B cell (primary cell): ENCODE measurements at regions of chr5 and their contacts with region 1.

Region 1: DNA sequence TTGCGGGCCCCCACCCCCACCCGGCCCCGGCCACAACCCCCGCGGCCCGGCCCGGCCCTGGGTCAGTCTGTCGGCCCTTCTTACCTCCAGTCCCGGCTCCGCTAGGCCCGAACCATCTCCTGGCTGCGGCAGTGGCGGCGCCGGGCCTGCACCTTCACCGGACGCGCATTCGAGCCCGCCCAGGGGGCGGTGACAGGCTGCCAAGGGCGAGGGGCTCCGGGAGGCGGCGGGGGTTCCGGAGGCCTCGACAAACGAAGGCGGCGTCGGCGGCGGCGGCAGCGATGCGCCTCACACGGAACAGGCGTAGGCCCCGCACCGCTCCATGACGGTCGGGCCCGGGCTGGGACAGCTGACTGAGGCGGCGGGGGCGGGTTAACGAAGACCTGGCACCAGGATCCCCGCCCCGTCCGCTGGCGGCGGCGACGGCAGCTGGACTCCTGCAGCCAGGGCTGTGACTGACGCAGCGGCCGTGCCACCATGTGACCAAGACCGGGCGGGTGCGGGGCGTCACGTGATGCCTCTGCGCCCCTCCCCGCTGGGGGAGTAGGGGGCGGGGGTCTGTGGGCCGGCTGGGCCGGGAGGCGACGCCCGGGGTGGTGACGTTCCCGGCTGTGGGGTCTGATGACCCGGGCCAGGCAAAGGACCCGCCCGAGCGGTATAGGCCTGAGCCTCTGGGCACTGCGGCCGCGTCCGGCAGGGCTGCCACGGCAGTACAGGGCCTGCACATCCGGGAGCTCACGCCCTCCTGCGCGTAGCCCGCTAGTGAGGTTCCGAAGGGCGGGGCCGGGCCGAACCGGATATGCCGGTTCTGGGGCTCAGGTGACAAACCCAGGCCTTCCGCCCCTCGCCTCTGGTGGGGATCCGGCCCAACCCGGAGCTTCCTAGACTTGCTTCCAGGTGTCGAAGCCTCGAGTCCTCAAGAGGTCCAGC is at the start of gene AFF4:
- DNase-seq: peak; percentile 96
- ATAC-seq: peak; percentile 84
- H3K4me3 ChIP-seq: peak within 1 kb of the TSS; percentile 63 to 95 (median 83)
- H3K4me3 Mint-ChIP-seq: peak within 1 kb of the TSS; percentile 97
- H3K27ac ChIP-seq: peak within 1 kb of the TSS; percentile 92 to 97
- H3K27ac Mint-ChIP-seq: peak within 1 kb of the TSS; percentile 94
- H3K4me1 ChIP-seq: peaks cover 17 to 26% of the 10 kb centered on the region in 2 donors
- H3K4me1 Mint-ChIP-seq: peaks cover 29% of the 10 kb centered on the region
- H3K27me3 ChIP-seq: no peaks in the 10 kb centered on the region
- H3K27me3 Mint-ChIP-seq: no peaks in the 10 kb centered on the region
- CTCF ChIP-seq: no peak
- total RNA-seq, gene AFF4: 81.5 and 87.4 TPM in 2 replicates

Region 2: GRCh38 chr5:132866342-132867045 is 96.9 kb before region 1 on chr5 and contains the starts of genes GDF9 and UQCRQ:
- CTCF ChIA-PET with region 1: no interaction called
- POLR2A ChIA-PET with region 1: no interaction called
- intact Hi-C with region 1: loop called (anchors 1 kb)
- DNase-seq: peak; percentile 97
- ATAC-seq: peak; percentile 99
- H3K4me3 ChIP-seq: peak within 1 kb of the TSS; percentile 67 to 93 (median 81)
- H3K4me3 Mint-ChIP-seq: peak within 1 kb of the TSS; percentile 93
- H3K27ac ChIP-seq: peak within 1 kb of the TSS; percentile 92 to 93
- H3K27ac Mint-ChIP-seq: peak within 1 kb of the TSS; percentile 98
- H3K4me1 ChIP-seq: peaks cover 16 to 19% of the 10 kb centered on the region in 2 donors
- H3K4me1 Mint-ChIP-seq: peaks cover 26% of the 10 kb centered on the region
- H3K27me3 ChIP-seq: no peaks in the 10 kb centered on the region
- H3K27me3 Mint-ChIP-seq: no peaks in the 10 kb centered on the region
- CTCF ChIP-seq: no peak
- total RNA-seq, gene GDF9: 0.51 and 0.67 TPM in 2 replicates
- total RNA-seq, gene UQCRQ: 78.5 and 90.0 TPM in 2 replicates

Region 3: GRCh38 chr5:132988124-132988408 is 24.6 kb after region 1 on chr5:
- CTCF ChIA-PET with region 1: interaction called, 3 read pairs
- POLR2A ChIA-PET with region 1: interaction called, 15 read pairs
- intact Hi-C with region 1: no loop called
- DNase-seq: no peak
- ATAC-seq: no peak
- H3K4me3 ChIP-seq: no peak overlapping the region
- H3K4me3 Mint-ChIP-seq: no peak overlapping the region
- H3K27ac ChIP-seq: no peak overlapping the region
- H3K27ac Mint-ChIP-seq: no peak overlapping the region
- H3K4me1 ChIP-seq: no peaks in the 10 kb centered on the region
- H3K4me1 Mint-ChIP-seq: no peaks in the 10 kb centered on the region
- H3K27me3 ChIP-seq: no peaks in the 10 kb centered on the region
- H3K27me3 Mint-ChIP-seq: no peaks in the 10 kb centered on the region
- CTCF ChIP-seq: no peak

Region 4: GRCh38 chr5:133025804-133026663 is 62.6 kb after region 1 on chr5 and contains the start of gene ZCCHC10:
- CTCF ChIA-PET with region 1: interaction called, 3 read pairs
- POLR2A ChIA-PET with region 1: interaction called, 7 read pairs
- intact Hi-C with region 1: loop called (anchors 1 kb)
- DNase-seq: peak; percentile 94
- ATAC-seq: peak; percentile 99
- H3K4me3 ChIP-seq: peak within 1 kb of the TSS; percentile 93 to 100 (median 98)
- H3K4me3 Mint-ChIP-seq: peak within 1 kb of the TSS; percentile 90
- H3K27ac ChIP-seq: peak within 1 kb of the TSS; percentile 92 to 98
- H3K27ac Mint-ChIP-seq: peak within 1 kb of the TSS; percentile 93
- H3K4me1 ChIP-seq: peaks cover 26 to 32% of the 10 kb centered on the region in 2 donors
- H3K4me1 Mint-ChIP-seq: peaks cover 42% of the 10 kb centered on the region
- H3K27me3 ChIP-seq: no peaks in the 10 kb centered on the region
- H3K27me3 Mint-ChIP-seq: no peaks in the 10 kb centered on the region
- CTCF ChIP-seq: no peak
- total RNA-seq, gene ZCCHC10: 30.6 and 34.0 TPM in 2 replicates

Region 5: DNA sequence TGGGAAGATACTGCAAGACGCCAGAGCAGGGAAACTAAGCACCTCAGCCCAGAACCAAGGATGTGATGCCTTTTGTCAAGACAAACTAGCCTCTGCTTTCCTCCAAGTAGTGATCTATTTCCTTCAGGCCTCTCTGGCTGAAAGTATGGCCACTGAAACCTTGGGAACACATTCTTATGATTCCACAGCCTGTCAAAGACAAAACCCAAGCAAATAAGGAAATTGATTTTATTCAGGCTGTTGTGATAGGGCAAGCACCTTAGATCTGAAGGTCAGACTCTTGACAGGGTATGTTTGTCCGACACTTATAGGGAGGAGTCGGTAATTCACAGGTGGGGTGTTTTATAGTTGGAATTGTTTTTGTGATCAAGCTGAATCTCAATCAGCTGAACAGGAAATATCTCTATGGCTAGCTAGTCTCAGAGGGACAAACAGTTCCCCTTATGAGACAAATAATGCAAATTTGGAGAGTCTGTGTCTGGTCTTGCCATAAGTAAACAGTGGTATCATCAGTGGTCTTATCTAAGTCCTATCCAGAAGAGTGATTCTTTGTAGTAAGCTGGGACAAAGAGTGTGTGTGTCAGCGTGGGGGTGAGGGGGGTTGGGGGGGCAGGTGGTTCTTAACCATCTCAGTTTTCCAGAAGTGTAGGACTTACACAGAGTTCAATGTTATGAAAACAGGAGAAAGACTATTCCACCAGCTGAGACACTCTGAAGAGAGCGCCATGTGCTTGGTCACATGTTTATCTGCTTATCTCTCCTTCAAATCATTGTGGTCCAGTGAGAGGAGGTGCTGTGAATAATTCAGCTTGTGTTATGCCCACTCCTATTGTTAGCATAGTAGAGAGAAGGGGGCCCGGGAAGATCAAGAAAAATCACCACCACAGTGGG is 69.7 kb after region 1 on chr5:
- CTCF ChIA-PET with region 1: interaction called, 3 read pairs
- POLR2A ChIA-PET with region 1: interaction called, 16 read pairs
- intact Hi-C with region 1: no loop called
- DNase-seq: peak; percentile 79
- ATAC-seq: peak; percentile 92
- H3K4me3 ChIP-seq: peak overlapping the region in 3 of 5 experiments; percentile 1 to 36 (median 2)
- H3K4me3 Mint-ChIP-seq: peak overlapping the region; percentile 81
- H3K27ac ChIP-seq: peak overlapping the region; percentile 90 to 94
- H3K27ac Mint-ChIP-seq: peak overlapping the region; percentile 97
- H3K4me1 ChIP-seq: peaks cover 57 to 69% of the 10 kb centered on the region in 2 donors
- H3K4me1 Mint-ChIP-seq: peaks cover 52% of the 10 kb centered on the region
- H3K27me3 ChIP-seq: no peaks in the 10 kb centered on the region
- H3K27me3 Mint-ChIP-seq: no peaks in the 10 kb centered on the region
- CTCF ChIP-seq: no peak

Region 6: DNA sequence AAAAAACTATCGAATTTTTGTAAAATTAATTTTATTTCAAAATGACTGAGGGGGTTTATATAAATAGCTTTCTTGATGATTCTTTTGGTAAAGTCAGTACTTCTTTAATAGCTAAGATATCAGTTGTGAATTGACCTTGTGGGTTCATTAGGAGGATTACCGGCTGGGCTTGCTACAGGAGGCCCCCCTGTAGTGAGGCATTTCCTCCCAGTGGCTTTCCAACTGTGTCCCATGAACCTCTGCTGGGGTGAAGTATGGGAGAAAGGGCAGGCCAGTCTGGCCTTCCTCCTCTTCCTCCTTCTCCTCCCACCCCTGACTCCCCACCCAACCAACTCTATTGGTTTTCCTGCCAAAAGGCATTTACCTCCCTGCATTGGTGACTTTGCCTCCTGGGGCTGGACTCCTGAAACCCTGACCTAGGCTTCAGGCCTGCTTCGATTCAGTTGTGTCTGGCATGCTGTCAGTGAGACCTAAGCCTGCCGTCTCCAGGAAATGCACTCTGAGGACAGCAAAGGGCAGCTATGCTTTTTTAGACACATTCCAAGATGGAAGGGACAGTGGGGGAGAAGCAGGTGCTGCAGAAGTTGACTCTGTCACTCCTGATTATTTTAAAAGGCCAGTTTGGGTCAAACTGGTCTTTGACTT is 233.1 kb after region 1 on chr5:
- CTCF ChIA-PET with region 1: no interaction called
- POLR2A ChIA-PET with region 1: no interaction called
- intact Hi-C with region 1: no loop called
- DNase-seq: no peak
- ATAC-seq: no peak
- H3K4me3 ChIP-seq: no peak overlapping the region
- H3K4me3 Mint-ChIP-seq: no peak overlapping the region
- H3K27ac ChIP-seq: no peak overlapping the region
- H3K27ac Mint-ChIP-seq: no peak overlapping the region
- H3K4me1 ChIP-seq: no peaks in the 10 kb centered on the region
- H3K4me1 Mint-ChIP-seq: no peaks in the 10 kb centered on the region
- H3K27me3 ChIP-seq: peaks cover 0 to 4% (median 0%) of the 10 kb centered on the region in 4 experiments
- H3K27me3 Mint-ChIP-seq: peaks cover 32% of the 10 kb centered on the region
- CTCF ChIP-seq: no peak

Region 7: GRCh38 chr5:133968049-133968980 is 1004.9 kb after region 1 on chr5 and contains the start of gene C5orf15:
- CTCF ChIA-PET with region 1: no interaction called
- POLR2A ChIA-PET with region 1: no interaction called
- intact Hi-C with region 1: loop called (anchors 2 kb)
- DNase-seq: peak; percentile 96
- ATAC-seq: peak; percentile 95
- H3K4me3 ChIP-seq: peak within 1 kb of the TSS; percentile 82 to 88 (median 85)
- H3K4me3 Mint-ChIP-seq: peak within 1 kb of the TSS; percentile 95
- H3K27ac ChIP-seq: peak within 1 kb of the TSS; percentile 89 to 94
- H3K27ac Mint-ChIP-seq: peak within 1 kb of the TSS; percentile 97
- H3K4me1 ChIP-seq: peaks cover 25 to 26% of the 10 kb centered on the region in 2 donors
- H3K4me1 Mint-ChIP-seq: peaks cover 53% of the 10 kb centered on the region
- H3K27me3 ChIP-seq: no peaks in the 10 kb centered on the region
- H3K27me3 Mint-ChIP-seq: no peaks in the 10 kb centered on the region
- CTCF ChIP-seq: no peak
- total RNA-seq, gene C5orf15: 27.4 and 28.2 TPM in 2 replicates